ENCODE measurements at regions of chr20 and their contacts with region 1.

Region 1: GRCh38 chr20:34538671-34539123 is 19.8 kb upstream of the MAP1LC3A start:
- DNase-seq: peak in 12 of 14 experiments; percentile 26 to 71 (median 46)
- ATAC-seq: peak; percentile 48
- H3K4me3 ChIP-seq: no peak overlapping the region
- H3K4me3 Mint-ChIP-seq: no peak overlapping the region
- H3K27ac ChIP-seq: no peak overlapping the region
- H3K27ac Mint-ChIP-seq: no peak overlapping the region
- H3K4me1 ChIP-seq: peaks cover 31% of the 10 kb centered on the region
- H3K4me1 Mint-ChIP-seq: peaks cover 28% of the 10 kb centered on the region
- H3K27me3 ChIP-seq: no peaks in the 10 kb centered on the region
- H3K27me3 Mint-ChIP-seq: no peaks in the 10 kb centered on the region
- CTCF ChIP-seq: peak; percentile 73

Region 2: DNA sequence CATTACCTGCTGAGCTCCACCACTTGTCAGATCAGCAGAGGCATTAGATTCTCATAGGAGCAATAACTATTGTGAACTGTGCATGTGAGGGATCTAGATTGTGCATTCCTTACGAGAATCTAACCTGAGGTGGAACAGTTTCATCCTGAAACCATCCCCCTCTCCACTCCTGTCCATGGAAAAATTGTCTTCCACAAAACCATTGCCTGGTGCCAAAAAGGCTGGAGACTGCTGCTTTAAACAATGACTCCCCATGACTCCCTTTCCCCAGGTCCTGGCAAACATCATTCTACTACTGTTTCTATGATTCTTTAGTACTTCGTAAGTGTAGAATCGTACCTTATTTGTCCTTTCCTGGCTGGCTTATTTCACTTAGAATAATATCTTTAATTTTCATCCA is 32.2 kb before region 1 on chr20:
- CTCF ChIA-PET with region 1: no interaction called
- POLR2A ChIA-PET with region 1: no interaction called
- intact Hi-C with region 1: no loop called
- DNase-seq: no peak
- ATAC-seq: no peak
- H3K4me3 ChIP-seq: no peak overlapping the region
- H3K4me3 Mint-ChIP-seq: no peak overlapping the region
- H3K27ac ChIP-seq: no peak overlapping the region
- H3K27ac Mint-ChIP-seq: no peak overlapping the region
- H3K4me1 ChIP-seq: no peaks in the 10 kb centered on the region
- H3K4me1 Mint-ChIP-seq: no peaks in the 10 kb centered on the region
- H3K27me3 ChIP-seq: no peaks in the 10 kb centered on the region
- H3K27me3 Mint-ChIP-seq: no peaks in the 10 kb centered on the region
- CTCF ChIP-seq: no peak

Region 3: DNA sequence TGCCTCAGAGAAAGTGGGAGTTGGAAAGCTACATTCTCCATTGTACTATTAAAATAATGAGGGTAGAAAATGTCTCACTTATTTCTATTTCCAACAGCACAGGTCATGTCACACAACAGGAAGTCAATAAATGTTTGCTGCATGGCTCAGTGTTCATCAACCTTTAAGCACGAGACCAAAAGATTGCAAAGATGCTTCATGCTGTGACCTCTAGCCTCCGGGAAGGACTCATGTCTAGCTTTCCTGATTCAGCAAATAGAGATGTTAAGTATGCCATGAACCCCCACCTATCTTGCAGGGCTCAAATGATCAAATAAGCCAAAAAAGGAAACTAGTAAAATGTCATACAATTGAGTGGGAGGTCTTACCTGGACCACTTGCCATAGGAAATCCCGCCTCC is 229.4 kb after region 1 on chr20:
- CTCF ChIA-PET with region 1: interaction called, 3 read pairs
- POLR2A ChIA-PET with region 1: interaction called, 3 read pairs
- intact Hi-C with region 1: loop called (anchors 5 kb)
- DNase-seq: no peak
- ATAC-seq: no peak
- H3K4me3 ChIP-seq: no peak overlapping the region
- H3K4me3 Mint-ChIP-seq: no peak overlapping the region
- H3K27ac ChIP-seq: no peak overlapping the region
- H3K27ac Mint-ChIP-seq: no peak overlapping the region
- H3K4me1 ChIP-seq: no peaks in the 10 kb centered on the region
- H3K4me1 Mint-ChIP-seq: no peaks in the 10 kb centered on the region
- H3K27me3 ChIP-seq: no peaks in the 10 kb centered on the region
- H3K27me3 Mint-ChIP-seq: no peaks in the 10 kb centered on the region
- CTCF ChIP-seq: no peak